Activated T-helper 2 cell treated with anti-CD3 and anti-CD28 coated beads, Interferon-gamma antibody, Interleukin-2, Interleukin-4, amounts not matched to agents 10 μg/mL and 5 μg/mL and 100 μg/mL, durations not matched to agents 14 hours and 24 hours and 36 hours (primary cell): ENCODE measurements at regions of chr3 and their contacts with region 1.

Region 1: GRCh38 chr3:25789596-25790556 is at the start of gene OXSM:
- DNase-seq: peak; percentile 89
- H3K4me3 Mint-ChIP-seq: peak within 1 kb of the TSS; percentile 92
- H3K27ac Mint-ChIP-seq: peak within 1 kb of the TSS; percentile 97
- H3K4me1 Mint-ChIP-seq: peaks cover 45% of the 10 kb centered on the region
- H3K27me3 Mint-ChIP-seq: no peaks in the 10 kb centered on the region
- total RNA-seq, gene OXSM: 15.7 and 15.8 TPM in 2 replicates

Region 2: GRCh38 chr3:25817107-25817506 is 27.2 kb after region 1 on chr3:
- intact Hi-C with region 1: loop called (anchors 1 kb)
- DNase-seq: no peak
- H3K4me3 Mint-ChIP-seq: no peak overlapping the region
- H3K27ac Mint-ChIP-seq: no peak overlapping the region
- H3K4me1 Mint-ChIP-seq: peaks cover 16% of the 10 kb centered on the region
- H3K27me3 Mint-ChIP-seq: peaks cover 20% of the 10 kb centered on the region

Region 3: GRCh38 chr3:27596334-27596841 is 1806.5 kb after region 1 on chr3:
- intact Hi-C with region 1: loop called (anchors 10 kb)
- DNase-seq: no peak
- H3K4me3 Mint-ChIP-seq: no peak overlapping the region
- H3K27ac Mint-ChIP-seq: peak overlapping the region; percentile 33
- H3K4me1 Mint-ChIP-seq: peaks cover 26% of the 10 kb centered on the region
- H3K27me3 Mint-ChIP-seq: no peaks in the 10 kb centered on the region